ENCODE measurements at regions of chr17 and their contacts with region 1.

Region 1: GRCh38 chr17:46758623-46759022 is 59.9 kb downstream of the WNT3 start:
- DNase-seq: no peak
- H3K4me3 ChIP-seq: no peak overlapping the region
- H3K27ac ChIP-seq: no peak overlapping the region
- H3K4me1 ChIP-seq: peaks cover 33% of the 10 kb centered on the region
- H3K27me3 ChIP-seq: no peaks in the 10 kb centered on the region

Region 2: GRCh38 chr17:46809110-46809571 is 50.5 kb after region 1 on chr17:
- in situ Hi-C with region 1: loop called (anchors 5 kb)
- DNase-seq: no peak
- H3K4me3 ChIP-seq: no peak overlapping the region
- H3K27ac ChIP-seq: no peak overlapping the region
- H3K4me1 ChIP-seq: peaks cover 15% of the 10 kb centered on the region
- H3K27me3 ChIP-seq: no peaks in the 10 kb centered on the region

Measured in GM23248 (cell line).